K562 (cell line): ENCODE measurements at regions of chr7 and their contacts with region 1.

Region 1: GRCh38 chr7:30740424-30741181 is 11.3 kb upstream of the INMT start:
- DNase-seq: peak; percentile 79 to 87 (median 86)
- ATAC-seq: peak; percentile 80
- H3K4me3 ChIP-seq: no peak overlapping the region
- H3K27ac ChIP-seq: no peak overlapping the region
- H3K4me1 ChIP-seq: peaks cover 4 to 16% of the 10 kb centered on the region in 2 experiments; a peak in 2 of 5 replicates
- H3K27me3 ChIP-seq: peaks cover 0 to 25% of the 10 kb centered on the region in 2 experiments; a peak in 4 of 5 replicates
- CTCF ChIP-seq: peak; percentile 91 to 99 (median 96)
- EP300 ChIP-seq: no peak
- POLR2A ChIP-seq: no peak
- RAD21 ChIP-seq: peak; percentile 83 to 96

Region 2: GRCh38 chr7:30164567-30164966 is 576.0 kb before region 1 on chr7:
- CTCF ChIA-PET with region 1: no interaction called
- POLR2A ChIA-PET with region 1: no interaction called
- in situ Hi-C with region 1: loop called (anchors 10 kb)
- intact Hi-C with region 1: loop called (anchors 10 kb)
- DNase-seq: peak; percentile 37 to 59 (median 50)
- ATAC-seq: peak; percentile 70
- H3K4me3 ChIP-seq: no peak overlapping the region
- H3K27ac ChIP-seq: no peak overlapping the region
- H3K4me1 ChIP-seq: peaks cover 12 to 39% of the 10 kb centered on the region in 2 experiments
- H3K27me3 ChIP-seq: peaks cover 26 to 34% of the 10 kb centered on the region in 2 experiments
- CTCF ChIP-seq: peak; percentile 54 to 81 (median 63); a peak in 4 of 6 replicates
- EP300 ChIP-seq: no peak
- POLR2A ChIP-seq: no peak
- RAD21 ChIP-seq: peak; percentile 75 to 79

Region 3: DNA sequence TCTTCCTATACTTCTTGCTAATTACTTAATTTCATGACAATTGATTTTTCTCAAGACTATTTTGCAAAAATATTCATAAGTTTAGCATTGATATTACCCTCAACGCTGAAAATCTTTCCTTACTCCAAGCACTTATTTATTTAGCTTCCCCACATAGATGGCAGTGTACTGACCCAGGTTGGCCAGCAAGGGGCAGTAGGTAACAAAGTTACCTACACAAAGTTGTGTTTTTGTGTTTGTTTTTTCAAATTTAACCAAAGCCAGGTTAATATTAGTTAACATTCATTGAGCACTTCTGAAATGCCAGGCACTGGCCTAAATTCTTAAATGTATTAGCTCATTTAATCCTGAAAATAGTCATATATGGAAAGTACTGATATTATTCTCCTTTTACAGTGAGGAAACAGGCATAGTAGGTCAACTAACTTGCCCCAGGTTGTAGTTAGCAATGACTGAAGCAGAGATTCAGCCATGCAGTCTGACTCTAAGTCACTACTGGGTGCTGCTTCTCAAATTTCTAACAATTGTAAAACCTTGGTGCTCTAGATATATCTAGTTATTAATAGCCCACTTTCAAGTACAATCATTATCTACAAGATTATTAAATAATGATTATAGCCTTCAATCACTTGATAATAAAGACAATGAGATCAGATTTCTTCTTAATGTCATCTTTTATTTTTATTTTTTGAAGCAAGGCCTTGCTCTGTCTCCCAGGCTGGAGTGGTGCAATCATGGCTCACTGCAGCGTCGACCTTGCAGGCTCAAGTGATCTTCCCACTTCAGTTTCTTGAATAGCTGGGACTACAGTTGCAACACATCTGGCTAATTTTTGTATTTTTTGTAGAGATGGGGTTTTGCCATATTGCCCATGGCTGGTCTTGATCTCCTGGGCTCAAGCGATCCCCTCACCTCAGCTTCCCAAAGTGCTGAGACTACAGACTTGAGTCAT is 230.2 kb before region 1 on chr7:
- CTCF ChIA-PET with region 1: no interaction called
- POLR2A ChIA-PET with region 1: no interaction called
- in situ Hi-C with region 1: no loop called
- intact Hi-C with region 1: loop called (anchors 5 kb)
- DNase-seq: peak; percentile 20 to 65 (median 42)
- ATAC-seq: peak; percentile 80
- H3K4me3 ChIP-seq: no peak overlapping the region
- H3K27ac ChIP-seq: no peak overlapping the region
- H3K4me1 ChIP-seq: no peaks in the 10 kb centered on the region; a peak in 2 of 5 replicates
- H3K27me3 ChIP-seq: no peaks in the 10 kb centered on the region
- CTCF ChIP-seq: peak; percentile 66 to 81 (median 78); a peak in 5 of 6 replicates
- EP300 ChIP-seq: no peak
- POLR2A ChIP-seq: no peak
- RAD21 ChIP-seq: peak; percentile 40 to 77

Region 4: DNA sequence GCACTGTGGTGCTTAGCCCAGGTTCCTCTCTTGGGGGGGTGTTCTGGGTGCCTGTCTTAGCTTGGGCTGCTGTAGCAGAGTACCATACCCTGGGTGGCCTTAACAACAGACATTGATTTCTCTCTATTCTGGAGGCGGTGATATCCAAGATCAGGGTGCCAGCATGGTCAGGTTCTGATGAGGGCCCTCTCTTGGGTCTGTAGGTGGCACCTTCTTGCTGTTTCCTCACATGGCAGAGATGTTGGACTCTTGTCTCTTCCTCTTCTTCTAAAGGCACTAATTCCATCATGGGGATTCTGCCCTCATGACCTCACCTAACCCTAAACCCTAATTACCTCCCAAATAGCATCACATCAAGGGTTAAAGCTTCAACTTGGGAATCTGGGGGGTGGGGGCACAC is 38.4 kb before region 1 on chr7:
- CTCF ChIA-PET with region 1: no interaction called
- POLR2A ChIA-PET with region 1: no interaction called
- in situ Hi-C with region 1: no loop called
- intact Hi-C with region 1: loop called (anchors 2 kb)
- DNase-seq: peak in 1 of 4 experiments; percentile 26
- ATAC-seq: peak; percentile 57; the same call in 2 of the 3 replicates
- H3K4me3 ChIP-seq: no peak overlapping the region
- H3K27ac ChIP-seq: no peak overlapping the region
- H3K4me1 ChIP-seq: peaks cover 0 to 9% of the 10 kb centered on the region in 2 experiments; a peak in 3 of 5 replicates
- H3K27me3 ChIP-seq: peaks cover 20 to 65% of the 10 kb centered on the region in 2 experiments
- CTCF ChIP-seq: peak; percentile 31 to 50 (median 32); a peak in 4 of 6 replicates
- EP300 ChIP-seq: no peak
- POLR2A ChIP-seq: no peak
- RAD21 ChIP-seq: peak in 1 of 2 experiments; percentile 42; a peak in 2 of 4 replicates

Region 5: GRCh38 chr7:30800785-30801252 is 60.2 kb after region 1 on chr7:
- CTCF ChIA-PET with region 1: no interaction called
- POLR2A ChIA-PET with region 1: no interaction called
- in situ Hi-C with region 1: loop called (anchors 5 kb)
- intact Hi-C with region 1: no loop called
- DNase-seq: peak; percentile 62 to 72 (median 65)
- ATAC-seq: peak; percentile 89
- H3K4me3 ChIP-seq: no peak overlapping the region
- H3K27ac ChIP-seq: no peak overlapping the region
- H3K4me1 ChIP-seq: no peaks in the 10 kb centered on the region; a peak in 2 of 5 replicates
- H3K27me3 ChIP-seq: no peaks in the 10 kb centered on the region
- CTCF ChIP-seq: peak; percentile 70 to 83 (median 74)
- EP300 ChIP-seq: no peak
- POLR2A ChIP-seq: no peak
- RAD21 ChIP-seq: peak; percentile 74 to 85

Region 6: GRCh38 chr7:31122649-31123058 is 382.1 kb after region 1 on chr7:
- CTCF ChIA-PET with region 1: no interaction called
- POLR2A ChIA-PET with region 1: no interaction called
- in situ Hi-C with region 1: no loop called
- intact Hi-C with region 1: loop called (anchors 1 kb)
- DNase-seq: peak; percentile 59 to 77 (median 74)
- ATAC-seq: peak; percentile 94
- H3K4me3 ChIP-seq: no peak overlapping the region
- H3K27ac ChIP-seq: no peak overlapping the region
- H3K4me1 ChIP-seq: no peaks in the 10 kb centered on the region
- H3K27me3 ChIP-seq: peaks cover 0 to 7% of the 10 kb centered on the region in 2 experiments; a peak in 3 of 5 replicates
- CTCF ChIP-seq: peak; percentile 85 to 92 (median 86)
- EP300 ChIP-seq: no peak
- POLR2A ChIP-seq: no peak
- RAD21 ChIP-seq: peak; percentile 77 to 86